GM12878 (cell line): ENCODE measurements at regions of chr5 and their contacts with region 1.

Region 1: DNA sequence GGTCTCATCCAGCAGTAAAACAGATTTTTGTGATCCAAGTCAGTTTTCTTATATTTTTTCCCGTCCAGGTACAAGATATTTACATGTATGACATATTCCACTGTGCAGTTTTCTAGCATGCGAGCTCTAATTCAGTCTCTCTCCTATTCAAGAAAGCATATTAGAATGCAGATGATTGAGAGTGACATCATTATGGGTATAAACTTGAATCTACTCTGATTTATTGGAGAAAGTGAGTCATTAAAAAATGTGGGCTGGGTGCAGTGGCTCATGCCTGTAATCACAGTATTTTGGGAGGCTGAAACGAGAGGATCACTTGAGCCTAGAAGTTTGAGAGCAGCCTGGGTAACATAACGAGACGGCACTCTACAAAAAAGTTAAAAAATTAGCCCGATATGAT is 6.2 kb downstream of the FER start:
- DNase-seq: no peak
- ATAC-seq: no peak
- H3K4me3 ChIP-seq: no peak overlapping the region
- H3K27ac ChIP-seq: no peak overlapping the region
- H3K4me1 ChIP-seq: no peaks in the 10 kb centered on the region
- H3K27me3 ChIP-seq: no peaks in the 10 kb centered on the region
- CTCF ChIP-seq: no peak
- EP300 ChIP-seq: no peak
- POLR2A ChIP-seq: no peak
- RAD21 ChIP-seq: no peak

Region 2: GRCh38 chr5:108769352-108769751 is 15.5 kb after region 1 on chr5:
- CTCF ChIA-PET with region 1: interaction called, 9 read pairs
- POLR2A ChIA-PET with region 1: interaction called, 4 read pairs
- RAD21 ChIA-PET with region 1: interaction called, 6 read pairs
- SMC1A ChIA-PET with region 1: interaction called, 14 read pairs
- in situ Hi-C with region 1: no loop called
- intact Hi-C with region 1: no loop called
- DNase-seq: no peak
- ATAC-seq: peak; percentile 77
- H3K4me3 ChIP-seq: peak overlapping the region; percentile 23; the same call in 1 of the 2 replicates
- H3K27ac ChIP-seq: peak overlapping the region; percentile 50
- H3K4me1 ChIP-seq: peaks cover 4% of the 10 kb centered on the region
- H3K27me3 ChIP-seq: no peaks in the 10 kb centered on the region
- CTCF ChIP-seq: no peak
- EP300 ChIP-seq: no peak
- POLR2A ChIP-seq: no peak
- RAD21 ChIP-seq: no peak

Region 3: DNA sequence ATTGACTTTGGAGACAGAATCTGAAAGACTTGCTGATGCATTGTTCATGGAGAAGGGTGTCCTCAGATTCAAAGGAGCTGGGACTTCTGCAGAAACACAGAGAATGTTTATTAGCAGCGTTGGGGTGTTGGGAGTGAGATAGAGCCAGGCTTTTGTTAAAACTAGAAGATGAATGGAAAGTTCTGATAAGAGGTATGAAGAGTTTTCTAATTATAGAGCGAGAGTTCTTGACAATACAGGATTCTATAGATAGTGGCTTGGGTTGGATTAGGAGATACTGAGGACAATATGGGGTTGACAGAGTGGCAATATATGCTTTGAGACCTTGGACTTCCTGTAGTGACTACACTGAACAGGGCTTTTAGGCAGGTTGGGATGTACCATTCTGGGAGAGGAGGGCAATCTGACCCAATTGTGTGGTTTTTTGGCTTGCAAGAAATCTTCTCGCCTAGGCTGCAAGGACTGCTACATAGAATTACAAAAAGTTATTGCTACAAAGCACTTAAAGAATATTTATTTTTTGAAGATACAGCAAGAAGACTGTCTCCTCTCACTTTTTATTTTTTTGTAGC is 76.9 kb after region 1 on chr5:
- CTCF ChIA-PET with region 1: no interaction called
- POLR2A ChIA-PET with region 1: interaction called, 10 read pairs
- RAD21 ChIA-PET with region 1: no interaction called
- SMC1A ChIA-PET with region 1: interaction called, 3 read pairs
- in situ Hi-C with region 1: no loop called
- intact Hi-C with region 1: no loop called
- DNase-seq: no peak
- ATAC-seq: no peak
- H3K4me3 ChIP-seq: no peak overlapping the region
- H3K27ac ChIP-seq: no peak overlapping the region
- H3K4me1 ChIP-seq: no peaks in the 10 kb centered on the region
- H3K27me3 ChIP-seq: no peaks in the 10 kb centered on the region
- CTCF ChIP-seq: no peak
- EP300 ChIP-seq: no peak
- POLR2A ChIP-seq: no peak
- RAD21 ChIP-seq: no peak